ENCODE measurements at regions of chr18 and their contacts with region 1.

Region 1: DNA sequence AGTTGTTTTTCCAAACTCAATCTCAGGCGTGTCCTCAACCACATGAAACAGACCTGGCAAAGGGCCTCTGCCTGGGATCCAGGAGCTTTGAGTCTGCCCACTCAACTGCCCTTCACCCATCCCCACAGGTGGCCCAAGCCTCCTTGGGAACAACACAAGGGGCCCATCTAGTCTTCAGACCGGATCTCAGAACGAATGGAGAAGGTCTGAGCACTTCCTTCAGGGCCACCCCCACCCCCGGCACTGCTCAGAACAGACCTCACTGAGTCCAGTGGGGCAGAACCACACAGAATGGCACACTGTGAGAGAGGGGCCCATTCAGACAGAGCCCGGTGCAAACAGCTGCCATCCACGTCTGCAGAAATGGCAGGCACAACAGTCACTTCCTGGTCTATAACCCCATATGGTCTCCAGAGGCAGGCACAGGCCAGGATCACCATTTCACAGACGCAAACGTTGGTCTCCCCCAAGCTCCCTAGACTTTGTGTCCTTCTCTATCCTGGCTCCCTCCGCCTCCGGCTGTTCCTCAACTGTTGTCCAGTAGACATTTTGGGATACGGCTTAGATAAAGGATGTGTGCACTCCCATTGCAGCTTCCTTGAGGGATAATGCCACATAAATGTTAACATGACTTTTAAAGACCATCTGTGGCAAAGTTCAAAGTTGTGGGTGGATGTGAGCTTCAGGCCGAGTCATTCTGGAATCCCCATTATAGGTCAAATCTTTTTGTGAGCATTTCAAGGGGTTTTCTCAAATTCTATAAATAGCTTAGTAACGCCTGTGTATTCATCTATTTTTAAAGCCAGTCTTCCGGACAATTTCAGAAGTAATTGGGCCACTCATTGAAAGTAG is 149.7 kb downstream of the SMAD7 start:
- DNase-seq: no peak
- H3K4me3 Mint-ChIP-seq: peak overlapping the region; percentile 46
- H3K27ac Mint-ChIP-seq: peak overlapping the region; percentile 94
- H3K4me1 Mint-ChIP-seq: peaks cover 61% of the 10 kb centered on the region
- H3K27me3 Mint-ChIP-seq: no peaks in the 10 kb centered on the region

Region 2: GRCh38 chr18:48728204-48728833 is 72.8 kb before region 1 on chr18:
- intact Hi-C with region 1: no loop called
- DNase-seq: no peak
- H3K4me3 Mint-ChIP-seq: no peak overlapping the region
- H3K27ac Mint-ChIP-seq: no peak overlapping the region
- H3K4me1 Mint-ChIP-seq: peaks cover 17% of the 10 kb centered on the region
- H3K27me3 Mint-ChIP-seq: no peaks in the 10 kb centered on the region

Region 3: GRCh38 chr18:48814490-48815178 is 13.5 kb after region 1 on chr18:
- intact Hi-C with region 1: loop called (anchors 1 kb)
- DNase-seq: no peak
- H3K4me3 Mint-ChIP-seq: no peak overlapping the region
- H3K27ac Mint-ChIP-seq: peak overlapping the region; percentile 85
- H3K4me1 Mint-ChIP-seq: peaks cover 47% of the 10 kb centered on the region
- H3K27me3 Mint-ChIP-seq: no peaks in the 10 kb centered on the region

Region 4: DNA sequence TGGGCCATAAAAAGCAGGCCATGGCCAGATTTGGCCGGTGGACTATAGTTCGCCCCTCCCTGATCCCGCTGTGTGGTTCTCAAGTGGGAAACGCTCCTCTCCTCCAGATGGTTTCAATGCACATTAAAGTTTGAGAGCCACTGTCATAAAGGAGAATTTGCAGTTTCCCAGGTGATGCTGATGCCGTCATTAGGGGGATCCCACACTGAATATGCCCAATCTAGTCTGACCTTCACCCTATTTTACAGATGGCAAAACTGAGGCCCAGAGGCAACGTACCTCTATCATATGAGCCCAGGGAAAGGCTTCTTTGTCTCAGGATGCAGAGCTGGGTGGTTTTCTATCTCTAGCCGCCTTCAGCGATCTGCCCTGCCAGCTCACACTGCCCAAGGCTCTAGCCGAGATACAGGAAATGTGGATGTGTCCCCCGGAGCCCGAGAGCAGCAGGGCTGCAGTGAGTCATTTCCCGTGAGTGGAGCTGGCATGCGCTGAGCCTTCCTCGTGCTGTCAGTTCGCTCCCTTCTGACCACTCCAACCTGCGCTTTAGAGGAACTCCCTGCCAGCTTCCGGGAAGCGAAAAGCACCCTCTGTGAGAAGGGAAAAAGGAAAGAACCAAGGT is 33.4 kb after region 1 on chr18:
- intact Hi-C with region 1: loop called (anchors 1 kb)
- DNase-seq: peak; percentile 66
- H3K4me3 Mint-ChIP-seq: peak overlapping the region; percentile 85
- H3K27ac Mint-ChIP-seq: peak overlapping the region; percentile 98
- H3K4me1 Mint-ChIP-seq: peaks cover 62% of the 10 kb centered on the region
- H3K27me3 Mint-ChIP-seq: no peaks in the 10 kb centered on the region

Region 5: GRCh38 chr18:49081511-49082155 is 280.5 kb after region 1 on chr18:
- intact Hi-C with region 1: loop called (anchors 10 kb)
- DNase-seq: no peak
- H3K4me3 Mint-ChIP-seq: no peak overlapping the region
- H3K27ac Mint-ChIP-seq: peak overlapping the region; percentile 83
- H3K4me1 Mint-ChIP-seq: peaks cover 31% of the 10 kb centered on the region
- H3K27me3 Mint-ChIP-seq: no peaks in the 10 kb centered on the region

Measured in activated T-helper 2 cell treated with anti-CD3 and anti-CD28 coated beads, Interferon-gamma antibody, Interleukin-2, Interleukin-4, amounts not matched to agents 10 μg/mL and 5 μg/mL and 100 μg/mL, durations not matched to agents 14 hours and 24 hours and 36 hours (primary cell).